PC-9 (cell line): ENCODE measurements at regions of chr12 and their contacts with region 1.

Region 1: DNA sequence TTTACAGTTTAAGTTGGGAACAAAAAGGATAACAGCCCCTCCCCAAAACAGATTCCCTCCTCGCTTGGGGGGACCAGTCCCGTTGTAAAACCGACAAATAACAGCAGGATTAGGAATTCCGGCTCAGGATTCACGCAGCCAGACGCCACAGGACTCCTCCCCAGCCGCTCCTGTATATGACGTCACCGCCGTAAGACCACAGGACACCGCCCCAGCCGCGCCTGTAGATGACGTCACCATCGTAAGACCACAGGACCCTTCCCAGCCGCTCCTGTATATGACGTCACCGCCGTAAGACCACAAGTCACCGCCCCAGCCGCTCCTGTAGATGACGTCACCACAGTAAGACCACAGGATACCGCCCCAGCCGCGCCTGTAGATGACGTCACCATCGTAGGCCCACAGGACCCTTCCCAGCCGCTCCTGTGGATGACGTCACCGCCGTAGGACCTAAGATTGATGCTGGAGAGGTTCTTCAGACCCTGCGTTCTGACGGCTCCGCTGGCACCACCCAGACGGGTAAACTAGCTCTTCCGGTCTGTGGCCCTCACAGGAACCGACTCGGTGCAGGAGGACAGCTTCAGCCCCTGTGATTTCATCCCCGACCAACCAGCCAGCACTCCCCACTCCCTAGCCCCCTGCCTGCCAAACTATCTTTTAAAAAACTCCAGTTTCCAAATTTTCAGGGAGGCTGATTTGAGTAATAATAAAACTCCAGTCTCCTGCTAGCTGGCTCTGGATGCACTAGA is 43.9 kb upstream of the FBRSL1 start:
- DNase-seq: peak; percentile 87 to 89
- H3K4me3 ChIP-seq: peak overlapping the region; percentile 69
- H3K27ac ChIP-seq: peak overlapping the region; percentile 48
- H3K4me1 ChIP-seq: peaks cover 4% of the 10 kb centered on the region; the same call in 1 of the 2 replicates
- H3K27me3 ChIP-seq: peaks cover 45% of the 10 kb centered on the region
- CTCF ChIP-seq: no peak

Region 2: GRCh38 chr12:132489602-132490239 is 43.7 kb after region 1 on chr12 and contains the start of gene FBRSL1:
- CTCF ChIA-PET with region 1: no interaction called
- POLR2A ChIA-PET with region 1: no interaction called
- intact Hi-C with region 1: loop called (anchors 2 kb)
- DNase-seq: peak; percentile 61 to 77
- H3K4me3 ChIP-seq: peak within 1 kb of the TSS; percentile 81
- H3K27ac ChIP-seq: no peak within 1 kb of the TSS
- H3K4me1 ChIP-seq: peaks cover 38% of the 10 kb centered on the region
- H3K27me3 ChIP-seq: peaks cover 43% of the 10 kb centered on the region
- CTCF ChIP-seq: no peak
- total RNA-seq, gene FBRSL1: 59.5 and 76.1 TPM in 2 replicates

Region 3: GRCh38 chr12:132593521-132594358 is 147.7 kb after region 1 on chr12:
- CTCF ChIA-PET with region 1: no interaction called
- POLR2A ChIA-PET with region 1: interaction called, 20 read pairs
- intact Hi-C with region 1: no loop called
- DNase-seq: peak; percentile 82 to 86
- H3K4me3 ChIP-seq: no peak overlapping the region
- H3K27ac ChIP-seq: no peak overlapping the region
- H3K4me1 ChIP-seq: no peaks in the 10 kb centered on the region; the same call in 1 of the 2 replicates
- H3K27me3 ChIP-seq: peaks cover 27% of the 10 kb centered on the region
- CTCF ChIP-seq: no peak